Gastrocnemius medialis (tissue), 4 donors: ENCODE measurements at regions of chr12 and their contacts with region 1.

Region 1: DNA sequence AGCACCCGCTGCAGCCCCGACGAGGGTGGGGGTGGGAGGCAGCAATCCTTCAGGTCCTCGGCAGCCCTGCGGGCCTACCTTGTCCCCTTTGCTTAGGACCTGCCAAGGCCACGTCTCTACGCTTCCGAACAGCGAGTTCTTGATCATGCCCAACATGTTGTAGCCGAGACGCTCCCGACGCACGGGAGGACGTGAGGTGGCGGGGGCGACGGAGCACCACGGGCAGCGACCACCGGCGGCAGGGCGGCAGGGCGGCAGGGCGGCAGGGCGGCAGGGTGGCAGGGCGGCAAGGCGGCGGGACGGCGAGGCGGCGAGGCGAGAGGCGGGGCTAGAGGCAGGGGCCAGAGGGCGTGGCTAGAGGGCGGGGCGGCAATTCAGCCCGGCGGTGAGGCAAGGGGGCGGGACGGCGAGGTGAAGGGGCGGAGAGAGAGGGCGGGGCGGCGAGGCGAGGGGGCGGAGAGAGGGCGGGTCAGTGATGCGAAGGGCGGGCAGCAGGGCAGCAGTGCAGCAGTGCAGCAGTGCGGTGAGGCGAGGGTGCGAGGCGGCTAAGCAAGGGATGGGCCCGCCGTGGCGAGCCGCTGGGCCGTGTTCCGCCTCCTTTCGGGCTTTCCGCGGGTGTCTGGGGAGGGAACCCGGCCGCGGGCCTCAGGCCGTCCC is at the start of gene HEBP1:
- DNase-seq: peak; percentile 90 to 91
- ATAC-seq: peak; percentile 94 to 95
- H3K4me3 ChIP-seq: peak within 1 kb of the TSS; percentile 67 to 89 (median 82)
- H3K27ac ChIP-seq: peak within 1 kb of the TSS; percentile 80 to 91 (median 82)
- H3K4me1 ChIP-seq: peaks cover 15 to 18% of the 10 kb centered on the region in 2 donors
- H3K27me3 ChIP-seq: no peaks in the 10 kb centered on the region
- CTCF ChIP-seq: no peak
- POLR2A ChIP-seq: peak; percentile 79 to 84
- total RNA-seq, gene HEBP1: 3.8 to 15.8 (median 9.9) TPM

Region 2: GRCh38 chr12:12704593-12705230 is 295.4 kb before region 1 on chr12:
- in situ Hi-C with region 1: no loop called
- intact Hi-C with region 1: no loop called
- DNase-seq: peak in 1 of 2 donors; percentile 46
- ATAC-seq: peak; percentile 100
- H3K4me3 ChIP-seq: no peak overlapping the region
- H3K27ac ChIP-seq: no peak overlapping the region
- H3K4me1 ChIP-seq: no peaks in the 10 kb centered on the region
- H3K27me3 ChIP-seq: no peaks in the 10 kb centered on the region
- CTCF ChIP-seq: peak; percentile 75 to 98 (median 83)
- POLR2A ChIP-seq: no peak

Region 3: DNA sequence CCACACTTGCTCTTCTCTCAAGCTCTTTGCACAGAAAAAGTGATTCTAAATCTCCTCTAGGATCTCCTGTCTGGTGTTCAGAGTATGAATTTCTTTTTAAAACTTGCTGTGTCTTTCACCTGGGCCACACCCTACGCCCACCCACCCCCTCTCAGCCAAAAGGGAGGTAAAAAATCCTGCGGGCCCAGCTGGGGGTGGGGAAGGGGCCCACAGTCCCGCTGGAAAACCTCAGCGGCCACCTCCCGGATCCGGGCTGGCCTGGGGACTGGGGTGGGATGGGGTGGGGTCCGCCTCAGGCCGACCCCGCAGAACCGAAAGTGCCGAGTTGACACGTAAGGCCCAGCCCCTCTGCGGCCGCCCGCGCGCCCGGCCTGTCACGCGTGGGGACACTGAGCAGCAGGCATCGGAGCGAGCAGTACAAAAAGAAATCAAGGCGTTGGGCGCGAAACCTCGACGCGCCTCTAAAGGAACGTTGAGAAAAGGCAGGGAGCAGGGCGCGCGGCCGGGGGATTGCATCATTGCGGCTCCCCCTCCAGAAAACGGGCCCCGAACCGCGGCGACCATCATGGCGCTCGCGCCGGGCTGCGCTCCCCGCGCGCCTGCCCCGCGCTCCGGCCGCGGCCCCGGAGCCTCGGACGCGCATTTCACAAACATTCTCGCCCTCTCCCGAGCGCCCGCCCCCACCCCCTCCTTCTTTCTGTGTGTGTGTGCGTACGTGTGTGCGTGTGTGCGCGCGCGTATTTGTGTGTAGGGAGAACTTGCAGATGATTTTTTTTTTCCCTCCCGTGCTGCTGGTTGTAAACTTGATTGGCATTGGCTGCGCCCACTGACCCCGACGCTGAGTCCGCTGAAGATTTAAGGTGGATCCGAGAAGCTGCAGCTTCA is 275.2 kb before region 1 on chr12:
- in situ Hi-C with region 1: no loop called
- intact Hi-C with region 1: loop called (anchors 2 kb)
- DNase-seq: peak; percentile 89 to 95
- ATAC-seq: peak; percentile 90 to 91
- H3K4me3 ChIP-seq: peak overlapping the region; percentile 66 to 88 (median 80)
- H3K27ac ChIP-seq: peak overlapping the region; percentile 96 to 99 (median 98)
- H3K4me1 ChIP-seq: peaks cover 36 to 37% of the 10 kb centered on the region in 2 donors
- H3K27me3 ChIP-seq: no peaks in the 10 kb centered on the region
- CTCF ChIP-seq: peak in 2 of 5 experiments; percentile 9 to 39
- POLR2A ChIP-seq: peak; percentile 85 to 91

Region 4: GRCh38 chr12:12786716-12787601 is 213.1 kb before region 1 on chr12:
- in situ Hi-C with region 1: loop called in 1 of 4 experiments (anchors 25 kb)
- intact Hi-C with region 1: no loop called
- DNase-seq: peak; percentile 51 to 73
- ATAC-seq: peak; percentile 72 to 74
- H3K4me3 ChIP-seq: peak overlapping the region; percentile 70 to 87 (median 80)
- H3K27ac ChIP-seq: peak overlapping the region; percentile 87 to 94 (median 92)
- H3K4me1 ChIP-seq: peaks cover 12 to 30% of the 10 kb centered on the region in 2 donors
- H3K27me3 ChIP-seq: no peaks in the 10 kb centered on the region
- CTCF ChIP-seq: peak; percentile 20 to 42 (median 32)
- POLR2A ChIP-seq: peak; percentile 59 to 71

Region 5: DNA sequence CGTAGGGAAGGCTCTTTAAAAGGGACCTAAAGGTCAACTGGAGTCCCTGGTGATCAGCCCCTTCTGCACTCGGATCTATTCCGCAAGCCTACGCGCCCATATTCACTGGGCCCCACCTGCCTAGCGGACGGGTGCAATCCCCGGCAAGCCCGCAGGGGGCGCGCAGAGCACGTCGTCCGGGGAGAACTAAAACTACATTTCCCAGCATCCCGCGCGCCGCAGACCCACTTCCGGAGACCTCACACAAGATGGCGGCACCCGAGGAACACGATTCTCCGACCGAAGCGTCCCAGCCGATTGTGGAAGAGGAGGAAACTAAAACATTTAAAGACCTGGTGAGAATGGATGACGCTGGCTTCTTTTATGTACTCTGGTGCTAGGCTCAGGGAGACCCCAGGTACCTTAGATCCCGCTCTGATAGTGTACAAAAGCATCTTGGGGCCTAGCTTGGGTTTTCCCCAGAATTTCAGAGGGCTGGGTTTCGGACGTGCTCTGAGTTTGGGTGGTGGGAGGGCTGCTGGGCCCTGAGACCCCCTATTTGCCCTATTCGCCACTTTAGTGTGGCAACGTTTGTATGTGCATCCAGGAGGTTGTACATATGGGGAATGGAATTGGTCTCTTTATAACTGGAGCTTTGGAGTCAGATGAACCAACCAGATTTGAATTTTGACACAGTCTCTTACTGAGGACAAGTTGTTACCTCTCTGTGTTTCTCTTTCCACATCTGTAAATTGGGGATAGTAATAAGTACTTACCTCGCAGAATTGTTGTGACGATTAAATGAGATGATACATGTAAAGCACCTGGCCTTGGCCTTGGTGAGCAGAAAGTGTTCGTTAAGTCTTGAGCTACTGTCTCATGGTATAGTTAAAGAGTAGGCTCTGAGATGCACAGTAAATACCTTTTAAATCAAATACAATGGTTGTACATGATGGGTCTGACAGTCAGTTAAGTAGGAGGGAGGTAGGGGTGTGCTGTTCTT is 186.7 kb before region 1 on chr12 and contains the start of gene DDX47:
- in situ Hi-C with region 1: loop called in 1 of 4 experiments (anchors 25 kb)
- intact Hi-C with region 1: loop called (anchors 5 kb)
- DNase-seq: peak; percentile 91 to 93
- ATAC-seq: peak; percentile 92 to 96
- H3K4me3 ChIP-seq: peak within 1 kb of the TSS; percentile 82 to 99 (median 93)
- H3K27ac ChIP-seq: peak within 1 kb of the TSS; percentile 78 to 88 (median 82)
- H3K4me1 ChIP-seq: peaks cover 24 to 38% of the 10 kb centered on the region in 2 donors
- H3K27me3 ChIP-seq: no peaks in the 10 kb centered on the region
- CTCF ChIP-seq: peak; percentile 95 to 99 (median 97)
- POLR2A ChIP-seq: peak in 1 of 2 donors; percentile 15
- total RNA-seq, gene DDX47: 37.1 to 75.4 (median 58.3) TPM

Region 6: GRCh38 chr12:12983420-12984035 is 16.6 kb before region 1 on chr12:
- in situ Hi-C with region 1: no loop called
- intact Hi-C with region 1: no loop called
- DNase-seq: no peak
- ATAC-seq: peak; percentile 55 to 68
- H3K4me3 ChIP-seq: no peak overlapping the region
- H3K27ac ChIP-seq: no peak overlapping the region
- H3K4me1 ChIP-seq: no peaks in the 10 kb centered on the region
- H3K27me3 ChIP-seq: no peaks in the 10 kb centered on the region
- CTCF ChIP-seq: peak in 4 of 5 experiments; percentile 6 to 56 (median 42)
- POLR2A ChIP-seq: no peak

Region 7: DNA sequence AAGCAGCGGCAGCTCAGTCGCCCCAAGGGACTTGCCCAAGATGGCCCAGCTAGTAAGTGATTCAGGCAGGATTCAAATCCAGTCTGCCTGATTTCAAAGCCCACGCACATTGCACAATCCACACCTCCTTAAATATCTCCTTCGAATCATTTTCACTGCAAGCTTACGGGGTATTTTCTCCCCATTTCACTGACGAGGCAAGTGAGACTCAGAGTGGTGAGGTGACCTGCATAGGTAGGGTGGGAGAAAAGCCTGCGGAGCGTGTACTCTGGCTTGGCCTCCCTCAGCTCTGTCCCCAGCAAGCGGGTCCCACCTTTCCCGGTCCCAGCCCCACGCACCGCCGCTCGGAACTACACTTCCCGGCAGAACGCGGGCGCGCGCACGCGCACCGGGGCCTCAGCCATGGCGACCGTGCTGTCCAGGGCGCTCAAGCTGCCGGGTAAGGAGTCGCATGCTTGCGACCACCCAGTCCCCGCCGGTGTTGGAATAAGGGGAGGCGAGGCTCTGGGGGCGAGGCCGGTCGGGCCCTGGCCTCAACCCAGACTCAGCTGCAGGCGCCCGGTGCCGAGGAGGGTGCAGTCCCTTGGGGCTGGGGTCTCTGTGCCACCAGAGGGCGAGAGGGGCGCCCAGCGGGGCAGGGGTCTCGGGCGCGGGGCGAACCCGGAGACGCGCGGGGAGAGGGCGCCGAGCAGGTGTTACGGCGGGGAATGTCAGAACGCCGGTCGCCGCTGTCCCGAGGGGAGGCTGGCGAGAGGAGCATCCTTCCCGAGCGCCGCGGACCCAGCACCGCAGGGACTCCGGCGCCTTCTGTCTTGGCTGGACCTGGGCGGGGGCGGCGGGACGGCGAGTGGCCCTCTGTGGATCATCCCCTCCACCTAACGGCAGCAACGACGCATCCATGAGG is 44.2 kb after region 1 on chr12 and contains the start of gene FAM234B:
- in situ Hi-C with region 1: no loop called
- intact Hi-C with region 1: loop called (anchors 1 kb)
- DNase-seq: peak; percentile 48 to 66
- ATAC-seq: peak; percentile 91 to 92
- H3K4me3 ChIP-seq: peak within 1 kb of the TSS; percentile 99 to 100 (median 100)
- H3K27ac ChIP-seq: peak within 1 kb of the TSS; percentile 64 to 80 (median 76)
- H3K4me1 ChIP-seq: peaks cover 0 to 3% of the 10 kb centered on the region in 2 donors
- H3K27me3 ChIP-seq: no peaks in the 10 kb centered on the region
- CTCF ChIP-seq: no peak
- POLR2A ChIP-seq: no peak
- total RNA-seq, gene FAM234B: 1.8 to 3.5 (median 2.5) TPM